Activated CD4-positive, alpha-beta T cell treated with anti-CD3 and anti-CD28 coated beads for 36 hours (primary cell): ENCODE measurements at regions of chr2 and their contacts with region 1.

Region 1: DNA sequence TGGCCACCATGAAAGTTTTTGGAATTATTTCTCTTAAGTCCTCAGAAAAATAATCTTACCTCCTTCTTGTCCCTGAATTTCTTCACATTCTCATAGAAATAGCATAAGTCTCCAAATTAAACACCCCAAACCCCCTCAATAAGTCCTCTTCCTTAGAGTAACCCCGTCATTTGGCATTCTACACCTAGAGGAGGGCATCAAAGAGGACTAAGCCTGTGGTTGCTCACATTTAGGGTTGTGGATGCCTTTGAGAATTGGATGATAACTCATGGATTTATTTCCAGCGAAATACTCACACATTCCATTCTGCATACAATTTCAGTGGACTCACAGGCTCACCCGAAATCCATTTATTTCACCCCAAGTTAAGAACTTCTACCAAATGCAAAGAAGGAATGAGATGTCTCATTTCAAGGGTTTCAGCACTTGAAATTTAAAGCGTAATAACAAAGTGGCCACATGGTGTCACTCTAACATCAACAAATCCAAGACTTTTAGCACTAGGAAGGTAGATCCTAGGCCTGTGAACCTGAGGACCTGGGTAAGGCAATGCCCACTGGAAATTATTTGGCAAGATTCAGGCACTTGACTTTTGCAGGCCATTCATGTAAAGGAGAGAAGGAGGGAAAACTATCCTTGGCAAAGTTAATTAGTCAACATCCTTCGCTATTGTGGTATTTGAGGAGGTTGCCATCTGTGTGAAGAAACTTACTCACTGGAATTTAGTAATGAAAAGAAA is 24.6 kb downstream of the DYTN start:
- DNase-seq: peak; percentile 23
- ATAC-seq: peak; percentile 63
- H3K4me3 Mint-ChIP-seq: no peak overlapping the region
- H3K27ac Mint-ChIP-seq: no peak overlapping the region
- H3K4me1 Mint-ChIP-seq: peaks cover 3% of the 10 kb centered on the region
- H3K27me3 Mint-ChIP-seq: no peaks in the 10 kb centered on the region

Region 2: DNA sequence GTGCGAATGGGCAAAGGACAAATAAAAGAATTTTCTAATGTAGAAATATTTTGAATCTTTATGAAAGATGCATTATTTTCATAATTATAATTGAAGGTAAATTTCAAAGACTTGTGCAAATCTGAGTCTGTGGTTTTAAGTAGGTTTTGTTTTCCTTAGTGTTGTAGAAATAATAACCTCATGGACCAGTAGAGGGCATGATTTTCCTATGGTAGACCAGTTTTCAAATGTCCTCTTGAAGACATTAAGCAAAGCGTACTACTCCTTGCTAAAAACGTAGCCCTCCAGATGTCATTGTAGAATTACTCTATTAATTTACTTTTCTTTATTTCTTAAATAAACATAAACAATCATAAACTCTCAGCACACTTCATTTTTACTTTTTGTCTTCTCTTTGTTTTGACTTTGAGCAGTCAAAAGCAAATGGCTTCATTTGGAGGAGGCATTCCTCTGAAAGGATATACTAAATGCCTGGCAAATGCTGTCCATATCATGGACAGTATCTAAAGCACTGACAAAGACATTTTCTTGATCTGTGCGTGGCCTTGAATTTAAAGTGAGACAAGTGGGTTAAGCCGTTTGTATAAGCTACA is 137.1 kb before region 1 on chr2:
- CTCF ChIA-PET with region 1: no interaction called
- POLR2A ChIA-PET with region 1: no interaction called
- intact Hi-C with region 1: no loop called
- DNase-seq: no peak
- ATAC-seq: peak; percentile 47
- H3K4me3 Mint-ChIP-seq: no peak overlapping the region
- H3K27ac Mint-ChIP-seq: no peak overlapping the region
- H3K4me1 Mint-ChIP-seq: peaks cover 24% of the 10 kb centered on the region
- H3K27me3 Mint-ChIP-seq: no peaks in the 10 kb centered on the region

Region 3: GRCh38 chr2:206783718-206784117 is 90.2 kb after region 1 on chr2:
- CTCF ChIA-PET with region 1: interaction called, 45 read pairs
- POLR2A ChIA-PET with region 1: no interaction called
- intact Hi-C with region 1: loop called (anchors 1 kb)
- DNase-seq: no peak
- ATAC-seq: no peak
- H3K4me3 Mint-ChIP-seq: no peak overlapping the region
- H3K27ac Mint-ChIP-seq: no peak overlapping the region
- H3K4me1 Mint-ChIP-seq: peaks cover 30% of the 10 kb centered on the region
- H3K27me3 Mint-ChIP-seq: no peaks in the 10 kb centered on the region

Region 4: GRCh38 chr2:206981739-206982340 is 288.3 kb after region 1 on chr2:
- CTCF ChIA-PET with region 1: interaction called, 3 read pairs
- POLR2A ChIA-PET with region 1: no interaction called
- intact Hi-C with region 1: loop called in 1 of 2 experiments (anchors 1 kb)
- DNase-seq: peak; percentile 76
- ATAC-seq: peak; percentile 80
- H3K4me3 Mint-ChIP-seq: no peak overlapping the region
- H3K27ac Mint-ChIP-seq: no peak overlapping the region
- H3K4me1 Mint-ChIP-seq: peaks cover 19% of the 10 kb centered on the region
- H3K27me3 Mint-ChIP-seq: no peaks in the 10 kb centered on the region

Region 5: DNA sequence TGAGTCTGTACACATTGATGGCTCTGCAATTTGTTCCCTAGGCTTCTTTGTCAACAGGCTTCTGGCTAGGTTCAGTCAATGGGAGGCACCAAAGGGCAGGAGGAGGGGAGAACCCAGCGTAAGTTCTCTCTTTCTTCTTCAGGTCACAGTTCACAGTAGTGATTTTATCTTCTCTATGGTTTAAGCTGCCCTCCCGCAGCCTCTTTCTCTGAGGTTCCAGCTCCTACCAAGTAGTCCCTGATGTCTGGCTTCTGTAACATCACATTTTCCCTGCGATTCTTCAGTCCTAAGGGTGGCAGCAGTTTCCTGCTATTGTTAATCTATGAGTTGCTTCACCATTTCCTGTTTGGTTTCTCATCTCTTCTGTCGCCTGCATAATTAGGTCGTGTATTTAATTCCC is 353.2 kb after region 1 on chr2:
- CTCF ChIA-PET with region 1: no interaction called
- POLR2A ChIA-PET with region 1: no interaction called
- intact Hi-C with region 1: loop called in 1 of 2 experiments (anchors 10 kb)
- DNase-seq: peak; percentile 44
- ATAC-seq: peak; percentile 95
- H3K4me3 Mint-ChIP-seq: no peak overlapping the region
- H3K27ac Mint-ChIP-seq: peak overlapping the region; percentile 19
- H3K4me1 Mint-ChIP-seq: peaks cover 13% of the 10 kb centered on the region
- H3K27me3 Mint-ChIP-seq: no peaks in the 10 kb centered on the region

Region 6: DNA sequence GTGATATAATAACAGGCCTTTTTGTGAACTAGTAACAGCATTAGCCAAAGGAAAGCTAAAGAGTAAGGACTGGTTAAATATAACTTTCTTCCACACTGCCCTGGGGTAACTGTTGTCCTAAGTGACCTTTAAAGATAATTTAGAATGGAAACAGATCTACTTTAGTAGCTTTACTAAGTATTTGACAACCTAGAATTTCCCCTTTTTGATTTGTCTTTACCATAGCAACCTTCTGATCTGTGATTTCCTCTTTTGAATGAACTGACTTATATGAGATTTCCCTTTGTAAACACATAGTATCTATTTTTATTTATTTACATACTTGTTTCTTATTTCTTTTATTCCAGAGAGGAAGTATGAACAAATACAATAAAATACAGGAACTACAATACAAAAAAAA is 482.7 kb after region 1 on chr2:
- CTCF ChIA-PET with region 1: no interaction called
- POLR2A ChIA-PET with region 1: no interaction called
- intact Hi-C with region 1: loop called in 1 of 2 experiments (anchors 10 kb)
- DNase-seq: no peak
- ATAC-seq: no peak
- H3K4me3 Mint-ChIP-seq: no peak overlapping the region
- H3K27ac Mint-ChIP-seq: no peak overlapping the region
- H3K4me1 Mint-ChIP-seq: peaks cover 10% of the 10 kb centered on the region
- H3K27me3 Mint-ChIP-seq: no peaks in the 10 kb centered on the region

Region 7: GRCh38 chr2:208072250-208072892 is 1378.8 kb after region 1 on chr2:
- CTCF ChIA-PET with region 1: no interaction called
- POLR2A ChIA-PET with region 1: no interaction called
- intact Hi-C with region 1: loop called in 1 of 2 experiments (anchors 2 kb)
- DNase-seq: peak; percentile 71
- ATAC-seq: peak; percentile 82
- H3K4me3 Mint-ChIP-seq: no peak overlapping the region
- H3K27ac Mint-ChIP-seq: no peak overlapping the region
- H3K4me1 Mint-ChIP-seq: no peaks in the 10 kb centered on the region
- H3K27me3 Mint-ChIP-seq: peaks cover 2% of the 10 kb centered on the region